ENCODE measurements at regions of chr6 and their contacts with region 1.

Region 1: DNA sequence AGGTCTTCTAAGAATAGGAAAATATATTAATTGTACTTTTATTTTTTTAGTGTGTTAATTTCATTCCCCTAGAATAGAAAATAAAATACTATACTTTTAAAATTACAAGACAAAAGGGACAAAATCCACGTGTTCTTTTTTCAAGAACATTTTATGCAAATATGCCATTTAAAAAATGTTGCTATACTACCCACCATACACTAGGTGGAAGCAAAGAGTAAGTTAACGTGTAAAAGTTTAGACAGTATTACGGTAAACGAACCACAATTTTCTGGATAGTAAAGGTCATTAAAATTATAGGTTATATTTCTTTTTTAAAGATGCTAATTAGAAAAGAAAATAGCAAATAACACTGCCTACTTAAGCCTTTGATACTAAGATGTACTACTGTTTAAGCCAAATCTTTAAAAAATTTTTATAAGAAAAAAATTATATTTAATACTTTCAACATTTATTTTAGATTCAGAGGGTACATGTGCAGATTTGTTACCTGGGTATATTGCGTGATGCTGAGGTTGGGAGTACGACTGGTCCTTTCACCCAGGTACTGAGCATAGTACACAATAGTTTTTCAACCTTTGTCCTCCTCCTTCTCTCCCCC is 287.6 kb downstream of the PHF3 start:
- H3K4me3 Mint-ChIP-seq: no peak overlapping the region
- H3K27ac Mint-ChIP-seq: no peak overlapping the region
- H3K4me1 Mint-ChIP-seq: no peaks in the 10 kb centered on the region
- H3K27me3 Mint-ChIP-seq: no peaks in the 10 kb centered on the region

Region 2: GRCh38 chr6:64330694-64331307 is 407.6 kb after region 1 on chr6:
- intact Hi-C with region 1: loop called (anchors 1 kb)
- H3K4me3 Mint-ChIP-seq: no peak overlapping the region
- H3K27ac Mint-ChIP-seq: no peak overlapping the region
- H3K4me1 Mint-ChIP-seq: no peaks in the 10 kb centered on the region
- H3K27me3 Mint-ChIP-seq: no peaks in the 10 kb centered on the region

Measured in dendritic cell treated with granulocyte-macrophage colony-stimulating factor and Interleukin-4, amounts not matched to agents 40 ng/mL and 50 ng/mL, for 4 days (primary cell).